ENCODE measurements at regions of chr21 and their contacts with region 1.

Region 1: DNA sequence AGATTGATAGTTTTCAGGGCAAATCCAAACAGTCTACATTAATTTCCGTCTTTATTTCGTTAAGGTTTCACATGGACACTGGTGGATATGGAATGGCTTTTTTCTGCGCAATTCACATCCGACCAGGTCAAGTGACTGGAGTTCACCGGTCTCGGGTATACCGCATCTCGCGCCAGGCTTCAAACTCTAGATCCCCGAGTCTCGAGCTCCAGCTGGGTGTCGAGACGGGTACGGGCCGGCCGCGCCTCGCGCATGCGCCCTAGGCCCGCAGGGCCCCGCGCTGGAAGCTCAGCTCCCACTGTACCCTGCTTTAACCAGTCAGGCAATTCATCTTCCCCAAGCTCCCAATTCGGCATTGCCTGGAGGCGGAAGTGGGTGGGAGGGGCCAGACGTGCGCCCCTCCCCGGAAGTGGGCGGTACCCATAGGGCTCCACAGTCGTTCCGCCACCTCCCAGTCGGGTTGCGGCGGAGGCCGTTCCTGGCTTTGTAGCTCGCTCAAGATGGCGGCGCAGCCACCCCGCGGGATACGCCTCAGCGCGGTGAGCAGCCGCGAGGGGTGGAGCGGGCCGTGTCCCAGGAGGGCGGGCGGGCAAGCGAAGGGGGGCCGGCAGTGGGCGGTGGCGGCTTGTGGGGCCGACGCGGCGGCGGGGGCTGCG is at the start of gene MORC3:
- DNase-seq: peak; percentile 99
- ATAC-seq: peak; percentile 87
- H3K4me3 ChIP-seq: peak within 1 kb of the TSS; percentile 69 to 98 (median 94)
- H3K4me3 Mint-ChIP-seq: peak within 1 kb of the TSS; percentile 97
- H3K27ac ChIP-seq: peak within 1 kb of the TSS; percentile 86 to 92
- H3K27ac Mint-ChIP-seq: peak within 1 kb of the TSS; percentile 98
- H3K4me1 ChIP-seq: peaks cover 30 to 39% of the 10 kb centered on the region in 2 donors
- H3K4me1 Mint-ChIP-seq: peaks cover 54% of the 10 kb centered on the region
- H3K27me3 ChIP-seq: no peaks in the 10 kb centered on the region
- H3K27me3 Mint-ChIP-seq: no peaks in the 10 kb centered on the region
- CTCF ChIP-seq: no peak
- total RNA-seq, gene MORC3: 104 and 113 TPM in 2 replicates

Region 2: DNA sequence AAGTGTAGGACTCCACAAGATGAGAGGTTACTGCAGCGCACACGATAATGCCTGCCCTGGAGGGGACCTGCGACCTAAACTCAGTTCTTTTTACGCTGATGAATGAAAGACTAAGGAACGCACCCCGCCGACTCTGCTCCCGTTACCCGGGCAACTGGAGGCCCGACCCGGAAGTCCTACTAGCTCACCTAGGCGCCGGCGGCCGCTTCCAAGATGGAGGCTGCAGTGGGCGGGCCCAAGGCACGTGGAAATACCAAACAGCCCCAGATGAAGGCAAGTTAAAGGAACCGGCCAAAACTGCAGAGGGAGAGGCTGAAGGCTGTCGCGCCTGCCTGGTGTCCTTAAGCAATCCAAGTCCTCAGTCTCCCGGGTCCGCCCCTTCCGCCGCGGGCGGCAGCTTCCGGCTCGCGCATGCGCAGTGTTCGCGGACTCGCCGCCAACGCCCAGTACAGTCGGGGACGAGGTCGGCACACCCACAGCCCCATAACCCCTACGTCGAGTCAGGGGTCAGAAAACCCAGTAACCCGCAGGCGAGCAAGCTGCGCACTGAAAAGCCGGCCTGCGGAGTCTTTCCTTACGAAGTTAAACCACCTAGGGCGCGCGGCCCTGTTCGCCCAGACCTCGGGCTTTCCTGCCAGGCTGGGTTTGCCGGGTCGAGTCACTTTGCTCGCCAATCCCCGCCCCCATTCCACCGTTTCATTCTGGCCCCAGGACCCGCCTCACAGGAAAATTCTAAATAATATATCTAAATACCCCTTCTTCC is 259.6 kb before region 1 on chr21 and contains the start of gene SETD4:
- CTCF ChIA-PET with region 1: no interaction called
- POLR2A ChIA-PET with region 1: interaction called, 3 read pairs
- intact Hi-C with region 1: loop called (anchors 1 kb)
- DNase-seq: peak; percentile 96
- ATAC-seq: peak; percentile 89
- H3K4me3 ChIP-seq: peak within 1 kb of the TSS; percentile 80 to 95 (median 95)
- H3K4me3 Mint-ChIP-seq: peak within 1 kb of the TSS; percentile 92
- H3K27ac ChIP-seq: peak within 1 kb of the TSS; percentile 73 to 90
- H3K27ac Mint-ChIP-seq: peak within 1 kb of the TSS; percentile 97
- H3K4me1 ChIP-seq: peaks cover 3 to 15% of the 10 kb centered on the region in 2 donors
- H3K4me1 Mint-ChIP-seq: peaks cover 22% of the 10 kb centered on the region
- H3K27me3 ChIP-seq: no peaks in the 10 kb centered on the region
- H3K27me3 Mint-ChIP-seq: no peaks in the 10 kb centered on the region
- CTCF ChIP-seq: no peak
- total RNA-seq, gene SETD4: 48.5 and 51.5 TPM in 2 replicates

Region 3: DNA sequence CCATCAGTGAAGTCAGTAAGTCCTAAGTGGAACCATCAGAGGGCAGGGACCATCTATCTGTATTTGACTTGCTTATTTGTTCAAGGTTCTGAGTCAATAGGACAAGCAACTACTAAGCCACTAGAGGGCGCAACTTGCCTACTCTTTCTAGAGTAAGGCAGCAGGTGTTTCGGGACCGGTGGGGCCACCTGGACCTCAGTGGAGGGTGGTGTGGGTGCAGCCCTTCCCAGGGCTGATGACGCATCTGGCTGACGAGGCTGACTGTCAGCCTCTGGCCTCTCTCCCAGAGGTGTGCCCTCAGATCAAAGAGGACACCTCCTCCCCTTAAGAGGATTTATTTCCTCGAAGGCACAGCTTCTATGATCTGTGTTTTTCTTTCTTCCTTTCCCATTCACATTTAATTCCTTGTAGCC is 178.4 kb before region 1 on chr21:
- CTCF ChIA-PET with region 1: interaction called, 14 read pairs
- POLR2A ChIA-PET with region 1: interaction called, 8 read pairs
- intact Hi-C with region 1: no loop called
- DNase-seq: peak; percentile 93
- ATAC-seq: peak; percentile 95
- H3K4me3 ChIP-seq: no peak overlapping the region
- H3K4me3 Mint-ChIP-seq: no peak overlapping the region
- H3K27ac ChIP-seq: peak overlapping the region in 1 of 2 donors; percentile 18
- H3K27ac Mint-ChIP-seq: no peak overlapping the region
- H3K4me1 ChIP-seq: peaks cover 19 to 29% of the 10 kb centered on the region in 2 donors
- H3K4me1 Mint-ChIP-seq: peaks cover 24% of the 10 kb centered on the region
- H3K27me3 ChIP-seq: no peaks in the 10 kb centered on the region
- H3K27me3 Mint-ChIP-seq: no peaks in the 10 kb centered on the region
- CTCF ChIP-seq: peak; percentile 93

Region 4: GRCh38 chr21:36260030-36260787 is 59.7 kb before region 1 on chr21:
- CTCF ChIA-PET with region 1: interaction called, 50 read pairs
- POLR2A ChIA-PET with region 1: interaction called, 73 read pairs
- intact Hi-C with region 1: loop called (anchors 1 kb)
- DNase-seq: peak; percentile 78
- ATAC-seq: peak; percentile 44
- H3K4me3 ChIP-seq: peak overlapping the region; percentile 21 to 71 (median 34)
- H3K4me3 Mint-ChIP-seq: peak overlapping the region; percentile 86
- H3K27ac ChIP-seq: peak overlapping the region; percentile 68 to 77
- H3K27ac Mint-ChIP-seq: peak overlapping the region; percentile 94
- H3K4me1 ChIP-seq: peaks cover 81 to 90% of the 10 kb centered on the region in 2 donors
- H3K4me1 Mint-ChIP-seq: peaks cover 73% of the 10 kb centered on the region
- H3K27me3 ChIP-seq: no peaks in the 10 kb centered on the region
- H3K27me3 Mint-ChIP-seq: no peaks in the 10 kb centered on the region
- CTCF ChIP-seq: peak; percentile 82

Region 5: DNA sequence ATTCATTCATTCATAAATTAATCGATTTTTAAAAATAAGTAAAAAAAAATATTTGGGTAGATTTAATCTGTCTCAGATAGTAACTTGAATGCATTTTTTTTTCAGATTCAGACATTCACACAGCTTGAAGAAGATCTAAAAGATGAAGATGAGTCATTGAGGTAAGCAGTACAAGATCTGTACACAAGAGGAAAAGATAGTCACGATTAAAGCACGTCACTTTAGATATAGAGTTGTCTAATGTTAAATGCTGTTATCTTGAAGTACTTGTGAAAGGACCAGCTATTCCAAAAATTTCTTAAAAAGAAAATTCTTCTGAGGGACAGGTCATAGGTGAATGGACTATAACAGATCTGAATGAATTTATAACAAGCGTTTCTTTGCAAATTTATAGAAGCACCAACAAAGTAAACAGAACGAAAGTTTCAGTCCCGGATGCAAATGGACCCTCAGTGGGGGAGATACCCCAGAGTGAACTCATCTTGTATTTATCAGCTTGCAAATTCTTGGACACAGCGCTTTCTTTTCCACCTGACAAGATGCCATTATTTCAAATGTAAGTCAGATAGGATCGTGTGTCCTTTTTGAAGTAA is 31.1 kb before region 1 on chr21:
- CTCF ChIA-PET with region 1: interaction called, 11 read pairs
- POLR2A ChIA-PET with region 1: interaction called, 28 read pairs
- intact Hi-C with region 1: loop called (anchors 5 kb)
- DNase-seq: no peak
- ATAC-seq: peak; percentile 49
- H3K4me3 ChIP-seq: no peak overlapping the region
- H3K4me3 Mint-ChIP-seq: peak overlapping the region; percentile 76
- H3K27ac ChIP-seq: peak overlapping the region; percentile 43 to 75
- H3K27ac Mint-ChIP-seq: peak overlapping the region; percentile 92
- H3K4me1 ChIP-seq: peaks cover 6 to 15% of the 10 kb centered on the region in 2 donors
- H3K4me1 Mint-ChIP-seq: peaks cover 29% of the 10 kb centered on the region
- H3K27me3 ChIP-seq: no peaks in the 10 kb centered on the region
- H3K27me3 Mint-ChIP-seq: no peaks in the 10 kb centered on the region
- CTCF ChIP-seq: no peak

Region 6: DNA sequence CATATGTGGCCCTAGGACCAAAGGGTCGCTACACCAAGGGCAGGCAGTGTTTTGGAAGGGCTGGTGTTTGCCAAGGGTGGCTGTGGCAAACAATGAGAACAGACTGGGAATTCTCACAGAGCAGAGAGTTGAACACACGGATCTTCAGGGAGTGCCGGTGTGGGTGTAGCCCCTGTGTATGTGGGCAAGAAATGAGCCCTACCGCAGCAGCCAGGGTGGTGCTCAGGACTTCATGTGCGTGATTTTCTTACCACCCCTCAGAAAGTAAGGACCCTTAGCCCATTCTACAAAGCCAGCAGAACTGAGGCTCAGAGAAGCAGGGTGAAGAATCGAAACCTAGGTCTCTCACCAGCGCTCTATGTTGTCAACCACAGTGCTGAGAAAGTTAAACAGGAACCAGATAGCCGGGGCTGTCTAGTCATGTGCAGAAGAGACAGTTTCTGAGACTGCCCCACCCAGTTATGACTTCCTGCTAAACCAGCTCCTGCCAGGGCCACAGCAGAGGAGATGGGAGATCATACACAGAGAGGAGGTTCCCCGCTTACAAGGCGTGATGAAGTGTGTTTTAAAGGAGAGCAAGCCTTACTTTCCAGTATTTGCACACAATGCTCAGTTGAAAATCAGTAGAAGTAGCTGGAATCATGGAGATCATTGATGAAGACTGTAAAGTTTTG is 21.8 kb before region 1 on chr21:
- CTCF ChIA-PET with region 1: interaction called, 76 read pairs
- POLR2A ChIA-PET with region 1: interaction called, 123 read pairs
- intact Hi-C with region 1: loop called (anchors 1 kb)
- DNase-seq: peak; percentile 92
- ATAC-seq: peak; percentile 88
- H3K4me3 ChIP-seq: peak overlapping the region in 4 of 5 experiments; percentile 5 to 53 (median 29)
- H3K4me3 Mint-ChIP-seq: peak overlapping the region; percentile 80
- H3K27ac ChIP-seq: peak overlapping the region; percentile 94 to 97
- H3K27ac Mint-ChIP-seq: peak overlapping the region; percentile 97
- H3K4me1 ChIP-seq: peaks cover 52 to 71% of the 10 kb centered on the region in 2 donors
- H3K4me1 Mint-ChIP-seq: peaks cover 53% of the 10 kb centered on the region
- H3K27me3 ChIP-seq: no peaks in the 10 kb centered on the region
- H3K27me3 Mint-ChIP-seq: no peaks in the 10 kb centered on the region
- CTCF ChIP-seq: no peak